Ascending aorta (tissue), 2 donors: ENCODE measurements at regions of chr15 and their contacts with region 1.

Region 1: DNA sequence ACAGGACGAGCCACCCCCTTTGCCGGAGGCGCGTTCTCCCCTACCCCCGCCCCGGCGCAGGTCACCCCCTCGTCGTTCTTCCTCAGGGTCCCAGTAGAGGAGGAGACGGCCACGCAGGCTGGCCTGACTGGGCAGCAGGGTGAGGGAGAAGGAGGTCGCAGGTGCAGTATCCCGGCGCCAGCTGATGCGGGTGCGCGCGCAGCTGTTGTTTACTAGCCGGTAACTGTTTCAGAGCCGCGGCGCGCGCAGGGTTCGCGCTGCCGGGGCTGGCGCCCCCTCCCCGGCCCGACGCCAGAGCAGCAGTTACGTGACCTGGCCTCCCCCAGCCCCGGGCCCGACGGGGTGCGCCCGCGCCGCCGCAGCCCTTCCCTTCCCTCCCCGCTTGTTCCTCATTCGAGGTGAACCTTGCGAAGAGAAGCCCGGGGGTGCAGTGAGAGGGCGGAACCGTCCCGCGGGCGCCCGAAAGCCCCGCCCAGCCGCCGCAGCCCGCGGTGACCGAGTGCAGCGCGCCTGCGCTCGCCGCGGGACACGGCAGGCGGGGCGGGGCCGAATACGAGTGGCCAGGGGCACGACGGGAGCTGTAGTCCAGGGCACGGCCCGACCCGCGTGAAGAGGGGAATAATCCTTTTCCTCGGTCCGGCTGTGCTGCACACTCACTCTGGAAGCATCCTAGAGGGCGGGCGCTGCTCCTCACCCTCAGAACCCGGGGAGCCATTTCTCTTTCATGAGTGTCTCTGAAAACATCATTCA is at the start of gene SLC12A6:
- DNase-seq: peak; percentile 59 to 95
- H3K4me3 ChIP-seq: peak within 1 kb of the TSS; percentile 71 to 99
- H3K27ac ChIP-seq: peak within 1 kb of the TSS; percentile 74 to 90
- H3K4me1 ChIP-seq: peaks cover 10 to 25% of the 10 kb centered on the region in 2 donors
- H3K27me3 ChIP-seq: no peaks in the 10 kb centered on the region
- CTCF ChIP-seq: no peak
- total RNA-seq, gene SLC12A6: 65.8 TPM

Region 2: GRCh38 chr15:34284937-34285336 is 52.8 kb before region 1 on chr15:
- intact Hi-C with region 1: no loop called
- DNase-seq: no peak
- H3K4me3 ChIP-seq: no peak overlapping the region
- H3K27ac ChIP-seq: peak overlapping the region in 1 of 2 donors; percentile 11
- H3K4me1 ChIP-seq: no peaks in the 10 kb centered on the region
- H3K27me3 ChIP-seq: no peaks in the 10 kb centered on the region
- CTCF ChIP-seq: no peak

Region 3: DNA sequence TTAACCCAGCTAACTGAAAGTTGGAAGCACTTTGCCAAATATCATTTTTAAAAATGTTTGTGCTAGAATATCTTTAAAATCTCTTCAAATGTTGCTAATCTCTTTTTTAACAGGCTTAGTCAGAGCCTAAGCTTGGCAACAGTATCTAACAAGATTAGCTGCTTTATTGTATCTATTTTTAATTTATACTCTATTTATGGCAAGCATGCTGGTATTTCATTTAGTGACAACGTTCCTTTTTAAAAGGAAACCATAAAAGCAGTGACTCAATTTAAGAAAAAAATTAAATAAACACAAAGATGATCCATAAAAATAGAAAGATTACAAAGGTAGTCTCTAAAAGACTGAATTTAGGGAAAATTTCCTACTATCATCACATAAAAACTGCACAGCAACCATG is 40.7 kb before region 1 on chr15:
- intact Hi-C with region 1: loop called (anchors 2 kb)
- DNase-seq: no peak
- H3K4me3 ChIP-seq: peak overlapping the region; percentile 7 to 50
- H3K27ac ChIP-seq: peak overlapping the region; percentile 83 to 92
- H3K4me1 ChIP-seq: peaks cover 4 to 32% of the 10 kb centered on the region in 2 donors
- H3K27me3 ChIP-seq: no peaks in the 10 kb centered on the region
- CTCF ChIP-seq: no peak

Region 4: GRCh38 chr15:34318277-34319079 is 19.3 kb before region 1 on chr15:
- intact Hi-C with region 1: loop called (anchors 2 kb)
- DNase-seq: peak in 1 of 2 donors; percentile 80
- H3K4me3 ChIP-seq: peak overlapping the region; percentile 65 to 68
- H3K27ac ChIP-seq: peak overlapping the region; percentile 75 to 77
- H3K4me1 ChIP-seq: peaks cover 0 to 16% of the 10 kb centered on the region in 2 donors
- H3K27me3 ChIP-seq: no peaks in the 10 kb centered on the region
- CTCF ChIP-seq: no peak

Region 5: GRCh38 chr15:34587717-34588674 is 250.3 kb after region 1 on chr15:
- intact Hi-C with region 1: loop called (anchors 5 kb)
- DNase-seq: peak in 1 of 2 donors; percentile 85
- H3K4me3 ChIP-seq: peak overlapping the region; percentile 28 to 51
- H3K27ac ChIP-seq: peak overlapping the region; percentile 3 to 50
- H3K4me1 ChIP-seq: peaks cover 5 to 7% of the 10 kb centered on the region in 2 donors
- H3K27me3 ChIP-seq: no peaks in the 10 kb centered on the region
- CTCF ChIP-seq: peak; percentile 74 to 84 (median 75)

Region 6: DNA sequence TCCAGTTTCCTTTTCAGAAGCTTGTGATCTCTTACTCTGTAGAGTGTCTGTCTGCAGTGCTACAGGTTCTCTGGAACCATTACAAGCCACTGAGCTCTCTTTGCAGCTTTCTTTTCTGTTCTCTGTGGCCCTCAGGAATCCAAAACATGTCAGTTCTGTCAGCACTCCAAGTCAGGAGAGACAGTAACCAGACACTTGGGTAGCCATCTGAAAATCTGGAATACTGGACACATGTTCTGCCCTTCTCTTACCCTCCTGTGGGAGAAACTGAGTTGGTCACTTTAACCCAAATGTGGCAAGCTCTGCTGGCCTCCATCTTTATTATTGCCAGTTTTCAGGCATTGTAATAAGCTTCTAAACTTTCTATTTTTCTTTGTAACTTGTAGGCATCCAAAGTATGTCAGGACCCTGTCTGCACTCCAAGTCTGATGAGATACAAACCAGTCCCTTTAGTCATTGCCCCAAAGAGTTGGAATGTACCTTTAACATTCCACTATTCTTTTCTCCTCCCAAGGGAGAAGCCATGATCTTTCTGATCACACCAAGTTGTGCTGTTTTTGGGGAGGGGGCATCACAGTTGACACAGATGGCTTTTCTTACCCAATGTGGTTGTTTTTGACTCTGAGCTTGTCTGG is 1024.6 kb after region 1 on chr15:
- intact Hi-C with region 1: no loop called
- DNase-seq: no peak
- H3K4me3 ChIP-seq: no peak overlapping the region
- H3K27ac ChIP-seq: no peak overlapping the region
- H3K4me1 ChIP-seq: no peaks in the 10 kb centered on the region
- H3K27me3 ChIP-seq: no peaks in the 10 kb centered on the region
- CTCF ChIP-seq: no peak